ENCODE measurements at regions of chr19 and their contacts with region 1.

Region 1: GRCh38 chr19:46346821-46347571 is at the start of gene PPP5C:
- DNase-seq: peak; percentile 96
- ATAC-seq: peak; percentile 85
- total RNA-seq, gene PPP5C: 69.5 TPM

Region 2: DNA sequence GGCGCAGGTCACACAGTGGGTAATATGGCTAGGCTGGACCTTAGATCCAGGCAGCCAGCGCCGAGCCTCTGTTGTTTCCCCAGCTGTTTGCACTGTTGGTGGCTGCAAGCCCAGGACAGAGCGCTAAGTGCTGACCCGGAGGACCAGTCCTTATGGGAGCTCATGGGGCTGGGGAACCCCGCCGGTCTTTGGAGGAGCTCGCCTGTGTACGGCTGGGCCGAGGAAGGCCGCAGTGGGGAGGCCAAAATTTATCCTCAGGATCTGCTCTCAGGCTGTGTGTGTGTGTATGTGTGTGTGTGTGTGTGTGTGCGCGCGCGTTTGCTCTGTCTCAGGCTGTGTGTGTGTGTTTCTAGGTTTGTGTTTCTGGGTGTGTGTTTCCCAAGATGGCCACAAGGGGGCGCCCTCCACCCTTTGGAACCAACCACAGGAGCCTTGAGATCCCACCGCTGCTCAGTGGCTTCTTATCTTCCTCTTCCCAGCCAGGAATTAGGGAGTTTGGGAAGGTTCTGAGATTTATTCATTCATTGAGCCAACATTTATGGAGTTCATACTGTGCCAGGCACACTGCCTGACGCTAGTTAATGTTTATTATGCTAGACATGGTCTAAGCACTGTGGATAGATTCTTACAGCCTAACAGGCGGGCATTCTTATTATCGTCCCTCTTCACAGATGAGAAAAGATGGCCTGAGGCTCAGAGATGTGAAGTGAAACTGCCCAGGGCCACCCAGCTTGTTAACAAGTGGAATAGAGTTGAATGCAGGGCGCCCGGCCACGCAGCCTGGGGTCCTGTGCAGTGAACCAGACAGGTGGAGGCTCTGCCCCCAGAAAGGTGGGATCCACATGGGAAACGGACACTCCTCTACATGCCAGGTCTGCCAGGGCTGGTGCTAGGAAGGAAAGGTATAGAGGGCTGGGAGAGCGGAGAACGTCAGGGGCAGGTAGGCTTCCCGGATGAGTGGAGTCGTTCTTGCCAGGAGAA is 337.2 kb before region 1 on chr19:
- intact Hi-C with region 1: no loop called
- DNase-seq: peak; percentile 77
- ATAC-seq: peak; percentile 83

Region 3: DNA sequence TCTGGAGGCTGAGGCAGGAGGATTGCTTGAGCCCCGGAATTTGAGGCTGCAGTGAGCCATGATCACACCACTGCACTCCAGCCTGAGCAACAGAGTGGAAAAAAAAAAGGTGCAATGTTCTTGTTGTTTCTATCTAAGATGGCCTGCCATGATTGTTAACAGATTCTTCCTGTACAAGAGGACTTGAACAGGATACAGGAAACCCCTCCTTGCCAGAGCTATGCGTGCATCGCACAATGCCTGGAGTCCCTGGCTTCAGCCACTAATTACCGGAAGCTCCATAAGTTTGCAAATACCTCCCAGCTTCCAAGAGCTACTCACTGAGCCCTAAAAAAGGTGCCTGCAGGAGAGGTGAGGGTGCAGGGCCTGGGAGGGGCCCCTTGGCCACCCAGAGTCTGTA is 63.2 kb before region 1 on chr19:
- intact Hi-C with region 1: loop called (anchors 5 kb)
- DNase-seq: peak; percentile 52
- ATAC-seq: no peak

Region 4: DNA sequence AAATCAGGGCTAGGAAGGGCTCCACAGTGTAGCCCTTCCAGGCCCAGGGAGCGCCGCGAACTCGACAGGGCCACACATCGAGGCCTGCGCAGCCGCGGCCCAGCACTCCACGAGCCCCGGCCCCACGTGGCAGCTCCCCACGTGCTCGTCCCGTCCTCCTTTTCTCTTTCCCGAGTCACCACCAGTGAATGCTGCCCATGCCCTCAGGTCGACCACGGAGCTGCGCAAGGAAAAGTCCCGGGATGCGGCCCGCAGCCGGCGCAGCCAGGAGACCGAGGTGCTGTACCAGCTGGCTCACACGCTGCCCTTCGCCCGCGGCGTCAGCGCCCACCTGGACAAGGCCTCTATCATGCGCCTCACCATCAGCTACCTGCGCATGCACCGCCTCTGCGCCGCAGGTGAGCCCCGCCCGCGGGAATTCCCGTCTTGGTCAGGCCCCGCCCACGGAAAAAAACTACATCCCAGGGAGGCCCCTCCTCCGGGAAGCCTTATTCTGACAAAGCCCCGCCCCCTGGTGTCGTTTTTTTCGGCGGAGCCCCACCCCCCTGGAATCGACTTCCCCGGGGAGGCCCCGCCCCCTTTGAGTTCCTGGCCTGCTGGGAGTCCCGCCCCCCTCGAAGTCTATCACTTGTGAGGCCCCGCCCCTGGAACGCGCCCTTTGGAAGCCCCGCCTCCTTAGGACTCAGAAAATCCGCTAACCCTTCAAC is 43.2 kb before region 1 on chr19:
- intact Hi-C with region 1: loop called (anchors 5 kb)
- DNase-seq: peak; percentile 74
- ATAC-seq: peak; percentile 1

Measured in Right ventricle myocardium superior (tissue), 1 donor.